ENCODE measurements at regions of chr19 and their contacts with region 1.

Region 1: DNA sequence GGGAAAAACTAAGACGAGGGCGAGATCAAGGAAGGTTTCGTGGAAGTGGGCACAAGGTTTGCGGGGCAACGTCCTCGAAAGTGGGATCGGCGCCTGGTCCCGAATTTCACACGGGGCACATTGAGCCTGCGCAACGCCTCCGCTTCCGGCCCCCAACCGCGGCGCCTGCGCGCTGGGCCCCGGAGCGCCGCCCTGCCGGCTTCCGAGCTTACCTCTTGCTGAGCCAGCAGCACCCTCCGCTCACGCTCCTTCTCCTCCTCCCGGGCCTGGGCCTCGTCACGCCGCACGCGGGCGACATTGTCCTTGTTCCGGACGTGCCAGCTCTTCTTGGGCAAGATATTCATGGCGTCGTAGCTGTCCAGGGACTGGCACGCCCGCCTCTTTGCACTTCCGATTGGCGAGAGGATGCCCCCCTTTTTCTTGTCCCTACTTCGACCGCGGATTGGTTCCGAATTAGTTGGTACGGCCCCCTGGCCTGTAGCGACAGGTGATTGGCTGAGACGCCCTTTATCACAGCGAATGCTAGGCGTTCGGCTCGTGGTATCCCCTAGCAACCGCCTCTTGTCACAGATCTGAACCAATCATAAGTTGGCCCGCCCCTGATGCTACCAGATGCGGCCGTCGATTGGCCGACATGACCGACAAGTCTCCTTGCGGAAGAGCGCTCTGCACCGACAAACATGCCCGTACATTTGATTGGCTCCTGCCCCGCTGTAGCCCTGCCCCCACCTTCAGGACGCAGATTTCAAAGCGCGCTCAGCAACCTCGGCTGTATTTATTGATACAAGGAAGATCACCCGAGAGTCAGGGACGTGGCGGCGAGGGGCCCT is at the start of gene LENG1:
- H3K4me3 ChIP-seq: peak within 1 kb of the TSS; percentile 96
- H3K27ac ChIP-seq: peak within 1 kb of the TSS; percentile 78
- H3K4me1 ChIP-seq: peaks cover 4% of the 10 kb centered on the region; the same call in 1 of the 2 replicates
- CTCF ChIP-seq: peak; percentile 90

Region 2: DNA sequence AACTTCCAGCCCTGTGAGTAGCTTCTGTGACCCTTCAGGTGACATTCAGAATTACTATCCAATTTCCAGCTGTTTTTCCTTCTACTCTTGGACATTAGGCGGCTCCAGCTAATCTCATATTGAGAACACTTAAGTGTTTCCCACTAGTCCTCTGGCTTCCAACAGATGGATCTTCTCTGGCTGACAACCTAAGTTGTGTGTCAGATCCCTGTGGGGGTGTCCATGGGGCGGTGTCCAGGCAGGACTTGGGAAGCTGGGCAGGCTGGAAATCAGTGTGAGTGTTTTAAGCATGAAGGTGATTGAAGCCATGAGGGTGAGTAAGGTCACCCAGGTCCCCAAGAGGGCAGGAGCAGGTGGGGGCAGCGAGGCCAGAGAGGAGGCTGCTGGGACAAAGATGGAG is 11.9 kb before region 1 on chr19:
- CTCF ChIA-PET with region 1: interaction called, 9 read pairs
- POLR2A ChIA-PET with region 1: interaction called, 23 read pairs
- H3K4me3 ChIP-seq: no peak overlapping the region
- H3K27ac ChIP-seq: no peak overlapping the region
- H3K4me1 ChIP-seq: no peaks in the 10 kb centered on the region
- CTCF ChIP-seq: no peak

Region 3: GRCh38 chr19:54203151-54203611 is 43.6 kb after region 1 on chr19:
- CTCF ChIA-PET with region 1: no interaction called
- POLR2A ChIA-PET with region 1: interaction called, 15 read pairs
- H3K4me3 ChIP-seq: no peak overlapping the region
- H3K27ac ChIP-seq: no peak overlapping the region
- H3K4me1 ChIP-seq: peaks cover 10% of the 10 kb centered on the region
- CTCF ChIP-seq: no peak